Aorta (tissue), 5 donors: ENCODE measurements at regions of chr2 and their contacts with region 1.

Region 1: DNA sequence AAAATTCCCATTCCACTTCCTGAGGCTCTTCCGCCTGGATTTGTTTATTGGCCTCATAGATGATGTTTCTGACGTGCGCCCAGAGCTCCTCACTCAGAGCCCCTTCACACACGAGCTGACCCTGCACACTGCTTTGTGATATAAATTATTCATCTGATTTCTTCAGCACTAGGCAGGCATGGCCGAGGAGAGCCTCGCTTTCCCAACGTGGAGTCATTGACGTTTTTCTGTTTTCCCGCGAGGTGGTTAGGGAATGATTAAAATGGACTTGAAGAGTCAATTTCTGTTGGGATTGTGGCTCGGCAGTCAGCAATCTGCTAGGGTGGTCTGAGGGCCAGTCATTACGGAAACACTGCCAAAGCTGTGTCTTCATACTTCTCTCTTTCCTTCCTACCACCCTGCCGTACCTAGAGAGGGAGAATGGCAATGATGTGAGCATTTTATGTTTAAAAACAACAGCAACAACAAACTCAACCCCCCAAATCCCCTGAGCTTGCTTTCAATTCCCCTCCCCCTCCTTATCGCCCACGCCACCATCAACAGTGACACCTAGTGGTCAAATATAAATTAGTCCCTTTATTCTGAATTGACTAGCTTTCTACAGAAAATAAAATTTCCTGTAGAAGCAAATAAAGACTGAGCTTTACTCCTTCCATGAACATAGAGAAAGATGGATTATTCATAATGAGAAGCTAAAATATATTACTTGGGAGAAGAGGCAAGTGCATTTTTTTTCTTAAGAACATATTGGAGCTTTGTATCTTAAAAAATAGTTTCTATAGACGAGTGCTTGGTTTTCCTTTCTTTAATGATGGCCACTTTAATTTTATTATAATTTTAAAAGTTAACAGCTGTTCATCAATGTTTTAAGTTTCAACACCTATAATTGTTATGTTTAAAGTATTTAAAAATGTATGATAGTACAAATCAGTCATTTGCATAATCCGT is 285.1 kb downstream of the MTX2 start:
- DNase-seq: peak in 1 of 2 donors; percentile 43
- ATAC-seq: peak; percentile 86
- H3K4me3 ChIP-seq: peak overlapping the region; percentile 18 to 44
- H3K27ac ChIP-seq: peak overlapping the region in 1 of 2 donors; percentile 82
- H3K4me1 ChIP-seq: peaks cover 3 to 11% of the 10 kb centered on the region in 2 donors
- H3K27me3 ChIP-seq: no peaks in the 10 kb centered on the region

Region 2: GRCh38 chr2:176269319-176270099 is 284.9 kb before region 1 on chr2 and contains the start of gene MTX2:
- intact Hi-C with region 1: loop called (anchors 10 kb)
- DNase-seq: peak; percentile 77 to 90
- ATAC-seq: peak; percentile 97
- H3K4me3 ChIP-seq: peak within 1 kb of the TSS; percentile 44 to 88
- H3K27ac ChIP-seq: peak within 1 kb of the TSS in 1 of 2 donors; percentile 4
- H3K4me1 ChIP-seq: peaks cover 0 to 2% of the 10 kb centered on the region in 2 donors
- H3K27me3 ChIP-seq: peaks cover 0 to 2% of the 10 kb centered on the region in 2 donors
- total RNA-seq, gene MTX2: 18.0 to 18.5 TPM

Region 3: GRCh38 chr2:176398243-176399073 is 155.9 kb before region 1 on chr2:
- intact Hi-C with region 1: loop called in 1 of 2 experiments (anchors 10 kb)
- DNase-seq: no peak
- ATAC-seq: no peak
- H3K4me3 ChIP-seq: no peak overlapping the region
- H3K27ac ChIP-seq: no peak overlapping the region
- H3K4me1 ChIP-seq: peaks cover 0 to 3% of the 10 kb centered on the region in 2 donors
- H3K27me3 ChIP-seq: no peaks in the 10 kb centered on the region

Region 4: GRCh38 chr2:176454893-176455811 is 99.2 kb before region 1 on chr2:
- intact Hi-C with region 1: loop called (anchors 5 kb)
- DNase-seq: peak; percentile 85 to 95
- ATAC-seq: peak; percentile 91
- H3K4me3 ChIP-seq: no peak overlapping the region
- H3K27ac ChIP-seq: no peak overlapping the region
- H3K4me1 ChIP-seq: no peaks in the 10 kb centered on the region
- H3K27me3 ChIP-seq: no peaks in the 10 kb centered on the region

Region 5: GRCh38 chr2:176638167-176639015 is 84.0 kb after region 1 on chr2:
- intact Hi-C with region 1: loop called in 1 of 2 experiments (anchors 5 kb)
- DNase-seq: peak; percentile 77 to 94
- ATAC-seq: peak; percentile 94
- H3K4me3 ChIP-seq: peak overlapping the region; percentile 80 to 81
- H3K27ac ChIP-seq: no peak overlapping the region
- H3K4me1 ChIP-seq: no peaks in the 10 kb centered on the region
- H3K27me3 ChIP-seq: no peaks in the 10 kb centered on the region